Activated CD4-positive, alpha-beta memory T cell treated with anti-CD3 and anti-CD28 coated beads, Interleukin-2, amount 10 ng/mL, durations not matched to agents 7 days and 5 days (primary cell): ENCODE measurements at regions of chr4 and their contacts with region 1.

Region 1: GRCh38 chr4:1899149-1900086 is 28.2 kb downstream of the NSD2 start:
- DNase-seq: peak; percentile 79
- H3K4me3 Mint-ChIP-seq: no peak overlapping the region
- H3K27ac Mint-ChIP-seq: peak overlapping the region; percentile 86
- H3K4me1 Mint-ChIP-seq: peaks cover 74% of the 10 kb centered on the region
- H3K27me3 Mint-ChIP-seq: no peaks in the 10 kb centered on the region

Region 2: DNA sequence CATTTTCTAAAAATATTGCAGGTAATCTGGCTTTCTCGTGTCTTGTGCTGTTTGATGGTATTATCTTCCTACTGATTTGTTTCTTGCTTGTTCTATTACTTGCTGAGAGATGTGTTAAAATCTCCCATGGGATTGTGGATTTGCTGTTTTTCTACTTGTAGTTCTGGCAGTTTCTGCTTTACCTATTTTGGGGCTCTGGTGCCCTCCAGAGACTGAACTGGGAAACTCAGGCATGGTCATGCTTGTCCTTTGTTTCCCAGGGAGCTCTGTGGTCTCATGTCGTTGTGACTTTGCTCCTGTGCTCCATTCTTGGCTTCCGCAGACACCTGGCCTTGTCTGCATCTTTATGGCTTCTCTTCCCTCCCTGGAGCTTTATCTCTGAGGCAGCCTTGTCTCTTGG is 11.2 kb after region 1 on chr4:
- CTCF ChIA-PET with region 1: interaction called, 31 read pairs
- POLR2A ChIA-PET with region 1: interaction called, 3 read pairs
- DNase-seq: peak; percentile 32
- H3K4me3 Mint-ChIP-seq: no peak overlapping the region
- H3K27ac Mint-ChIP-seq: peak overlapping the region; percentile 7
- H3K4me1 Mint-ChIP-seq: peaks cover 52% of the 10 kb centered on the region
- H3K27me3 Mint-ChIP-seq: no peaks in the 10 kb centered on the region

Region 3: DNA sequence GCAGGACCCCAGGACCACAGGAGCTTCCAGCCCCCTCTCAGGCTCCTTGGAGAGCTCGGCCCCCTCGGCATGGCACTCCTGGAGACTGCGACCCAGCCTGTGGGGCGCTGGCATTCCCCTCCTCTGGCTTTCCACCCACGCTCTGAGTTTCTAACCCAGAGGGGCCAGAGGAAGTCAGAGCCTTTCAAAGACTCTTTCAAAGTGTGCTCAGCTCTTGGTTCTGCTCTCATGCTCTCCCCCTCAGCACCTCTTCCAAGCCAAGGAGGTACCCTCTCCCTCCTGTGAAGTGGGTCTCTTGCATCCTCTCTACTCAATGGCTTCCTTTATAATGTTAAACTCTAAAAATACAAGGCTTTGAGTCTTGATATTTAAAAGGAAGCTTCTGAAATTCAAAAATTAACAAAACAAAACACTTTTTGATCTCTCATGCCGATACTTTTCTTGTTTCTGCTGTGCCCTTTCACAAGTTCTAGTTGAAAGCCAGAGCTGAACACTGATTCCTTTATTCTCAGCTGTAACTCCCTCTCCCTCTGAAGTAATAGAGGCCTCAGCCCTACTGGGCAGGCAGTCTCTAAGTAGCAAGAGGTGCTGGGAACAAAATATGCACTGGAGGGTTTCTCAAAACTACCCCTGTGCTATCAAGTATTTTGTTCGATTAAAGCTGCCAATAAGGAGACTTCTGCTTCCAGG is 242.5 kb after region 1 on chr4:
- CTCF ChIA-PET with region 1: no interaction called
- POLR2A ChIA-PET with region 1: no interaction called
- DNase-seq: no peak
- H3K4me3 Mint-ChIP-seq: no peak overlapping the region
- H3K27ac Mint-ChIP-seq: no peak overlapping the region
- H3K4me1 Mint-ChIP-seq: peaks cover 5% of the 10 kb centered on the region
- H3K27me3 Mint-ChIP-seq: peaks cover 4% of the 10 kb centered on the region